GM12878 (cell line): ENCODE measurements at regions of chrX and their contacts with region 1.

Region 1: DNA sequence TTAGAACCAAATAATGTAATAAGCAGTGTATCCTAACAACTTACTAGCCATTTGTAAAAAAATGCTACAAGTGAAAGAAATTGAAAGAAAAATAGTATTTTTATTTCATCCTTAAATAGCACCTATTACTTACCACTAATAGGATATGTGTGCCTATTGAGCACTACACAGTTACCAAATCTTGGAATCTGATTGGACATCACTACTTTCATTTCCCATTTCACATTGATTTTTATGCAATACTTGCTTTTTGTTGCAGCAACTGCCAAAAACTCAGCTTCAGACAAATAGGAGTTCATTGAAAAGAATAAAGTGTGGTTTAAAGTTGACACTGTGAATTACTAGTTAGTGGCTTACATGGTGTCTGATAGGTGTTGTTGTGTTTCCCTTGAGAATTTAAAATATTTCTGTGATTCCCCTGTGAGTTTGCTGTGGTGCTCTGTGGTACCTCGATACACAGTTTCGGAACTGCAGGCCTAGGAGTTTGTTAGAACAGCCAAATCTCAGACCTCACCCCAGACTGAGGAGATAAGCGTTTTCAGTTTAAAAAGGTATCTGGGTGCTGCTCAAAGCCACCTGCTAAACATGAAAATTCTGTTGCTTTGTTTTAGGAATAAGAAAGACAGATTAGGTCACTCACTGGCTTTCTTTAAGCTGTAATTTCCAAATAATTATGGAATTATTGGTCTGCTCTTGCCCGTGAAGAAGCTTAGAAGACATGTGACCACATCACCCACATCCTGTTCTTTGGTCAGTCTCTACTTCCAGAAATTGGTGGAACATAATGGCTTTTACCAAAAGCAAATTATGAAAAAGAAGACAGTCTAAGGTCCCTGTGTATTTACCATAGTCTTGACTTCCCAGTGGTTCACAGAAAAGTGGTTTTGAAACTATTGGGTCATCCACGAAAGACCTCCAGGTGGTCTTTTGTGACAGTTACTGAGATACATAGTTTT is 97.8 kb downstream of the SYTL5 start:
- DNase-seq: peak; percentile 76
- ATAC-seq: peak; percentile 89
- H3K4me3 ChIP-seq: no peak overlapping the region
- H3K27ac ChIP-seq: peak overlapping the region; percentile 51; the same call in 1 of the 2 replicates
- H3K4me1 ChIP-seq: no peaks in the 10 kb centered on the region
- H3K27me3 ChIP-seq: no peaks in the 10 kb centered on the region
- CTCF ChIP-seq: no peak
- EP300 ChIP-seq: peak in 1 of 2 experiments; percentile 58; a peak in 2 of 4 replicates
- POLR2A ChIP-seq: no peak
- RAD21 ChIP-seq: no peak

Region 2: DNA sequence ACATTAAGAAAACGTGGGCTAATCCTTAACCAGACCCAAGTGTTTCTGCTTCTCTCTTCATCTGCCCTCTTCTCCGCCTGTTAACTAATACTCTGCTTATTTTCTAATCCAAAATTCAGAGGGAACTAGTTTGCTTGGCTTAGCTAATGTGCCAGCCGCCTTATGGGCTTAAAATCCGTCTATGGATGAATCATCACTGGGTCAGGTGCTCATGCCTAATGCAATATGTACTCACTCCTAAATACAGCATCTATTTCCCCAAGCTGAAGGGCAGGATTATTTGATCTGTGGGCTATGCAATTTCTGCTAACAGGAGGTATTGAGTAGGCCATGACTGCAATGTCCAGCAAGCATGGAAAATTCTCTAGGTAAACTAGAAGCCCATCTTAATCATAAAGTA is 269.2 kb before region 1 on chrX:
- CTCF ChIA-PET with region 1: no interaction called
- POLR2A ChIA-PET with region 1: no interaction called
- RAD21 ChIA-PET with region 1: no interaction called
- SMC1A ChIA-PET with region 1: no interaction called
- in situ Hi-C with region 1: no loop called
- intact Hi-C with region 1: no loop called
- DNase-seq: no peak
- ATAC-seq: no peak
- H3K4me3 ChIP-seq: no peak overlapping the region
- H3K27ac ChIP-seq: no peak overlapping the region
- H3K4me1 ChIP-seq: no peaks in the 10 kb centered on the region
- H3K27me3 ChIP-seq: no peaks in the 10 kb centered on the region
- CTCF ChIP-seq: no peak
- EP300 ChIP-seq: no peak
- POLR2A ChIP-seq: no peak
- RAD21 ChIP-seq: no peak

Region 3: DNA sequence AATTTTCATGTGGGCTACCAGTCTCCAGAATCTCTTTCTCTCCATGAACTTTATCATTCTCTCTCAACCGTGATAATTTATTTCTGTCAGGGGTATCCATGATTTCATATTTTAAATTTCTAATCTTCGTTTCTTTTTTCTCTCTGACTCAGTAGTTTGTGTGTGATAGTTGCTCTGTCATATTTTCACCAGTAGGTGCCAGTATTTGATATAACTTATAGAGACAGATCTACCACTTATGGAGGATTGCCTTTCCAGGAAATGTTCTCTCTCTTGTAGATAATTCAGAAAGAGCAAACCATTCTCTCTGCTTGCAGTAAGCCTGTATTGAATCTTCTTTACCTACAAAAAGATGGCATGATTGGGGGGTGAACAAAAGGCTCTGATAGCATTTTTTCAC is 177.4 kb before region 1 on chrX:
- CTCF ChIA-PET with region 1: no interaction called
- POLR2A ChIA-PET with region 1: no interaction called
- RAD21 ChIA-PET with region 1: no interaction called
- SMC1A ChIA-PET with region 1: no interaction called
- in situ Hi-C with region 1: no loop called
- intact Hi-C with region 1: loop called (anchors 2 kb)
- DNase-seq: peak; percentile 4
- ATAC-seq: peak; percentile 84
- H3K4me3 ChIP-seq: no peak overlapping the region
- H3K27ac ChIP-seq: no peak overlapping the region
- H3K4me1 ChIP-seq: no peaks in the 10 kb centered on the region
- H3K27me3 ChIP-seq: no peaks in the 10 kb centered on the region
- CTCF ChIP-seq: peak in 2 of 3 experiments; percentile 46 to 50; a peak in 3 of 6 replicates
- EP300 ChIP-seq: no peak
- POLR2A ChIP-seq: no peak
- RAD21 ChIP-seq: peak; percentile 60

Region 4: GRCh38 chrX:38055170-38055847 is 48.8 kb before region 1 on chrX:
- CTCF ChIA-PET with region 1: no interaction called
- POLR2A ChIA-PET with region 1: no interaction called
- RAD21 ChIA-PET with region 1: no interaction called
- SMC1A ChIA-PET with region 1: interaction called, 3 read pairs
- in situ Hi-C with region 1: no loop called
- intact Hi-C with region 1: loop called (anchors 5 kb)
- DNase-seq: peak; percentile 45
- ATAC-seq: peak; percentile 89
- H3K4me3 ChIP-seq: no peak overlapping the region
- H3K27ac ChIP-seq: no peak overlapping the region; the same call in 1 of the 2 replicates
- H3K4me1 ChIP-seq: no peaks in the 10 kb centered on the region
- H3K27me3 ChIP-seq: no peaks in the 10 kb centered on the region
- CTCF ChIP-seq: no peak
- EP300 ChIP-seq: no peak
- POLR2A ChIP-seq: no peak
- RAD21 ChIP-seq: no peak

Region 5: DNA sequence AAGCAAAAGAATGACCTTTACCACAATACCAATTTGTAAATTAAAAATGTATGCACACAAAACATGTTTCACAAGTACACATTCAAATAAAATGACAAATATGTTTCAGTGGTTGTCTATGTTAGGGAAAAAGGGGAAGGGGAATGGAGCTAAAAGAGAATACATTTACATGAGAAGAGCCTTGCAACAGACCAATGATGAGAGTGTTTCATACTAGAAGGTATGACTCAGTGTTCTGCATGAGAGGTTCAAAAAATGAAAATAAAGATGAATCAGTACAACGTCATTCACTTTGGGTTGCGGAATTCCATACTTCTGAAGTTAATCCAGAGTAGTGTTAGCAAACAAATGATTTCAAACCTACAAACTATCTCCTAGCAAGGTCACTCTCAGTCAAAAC is 171.5 kb after region 1 on chrX:
- CTCF ChIA-PET with region 1: no interaction called
- POLR2A ChIA-PET with region 1: no interaction called
- RAD21 ChIA-PET with region 1: no interaction called
- SMC1A ChIA-PET with region 1: no interaction called
- in situ Hi-C with region 1: no loop called
- intact Hi-C with region 1: loop called (anchors 10 kb)
- DNase-seq: peak; percentile 13
- ATAC-seq: peak; percentile 46
- H3K4me3 ChIP-seq: no peak overlapping the region
- H3K27ac ChIP-seq: no peak overlapping the region
- H3K4me1 ChIP-seq: peaks cover 2% of the 10 kb centered on the region
- H3K27me3 ChIP-seq: no peaks in the 10 kb centered on the region
- CTCF ChIP-seq: no peak
- EP300 ChIP-seq: no peak
- POLR2A ChIP-seq: no peak
- RAD21 ChIP-seq: no peak